HCT116 (cell line): ENCODE measurements at regions of chr3 and their contacts with region 1.

Region 1: DNA sequence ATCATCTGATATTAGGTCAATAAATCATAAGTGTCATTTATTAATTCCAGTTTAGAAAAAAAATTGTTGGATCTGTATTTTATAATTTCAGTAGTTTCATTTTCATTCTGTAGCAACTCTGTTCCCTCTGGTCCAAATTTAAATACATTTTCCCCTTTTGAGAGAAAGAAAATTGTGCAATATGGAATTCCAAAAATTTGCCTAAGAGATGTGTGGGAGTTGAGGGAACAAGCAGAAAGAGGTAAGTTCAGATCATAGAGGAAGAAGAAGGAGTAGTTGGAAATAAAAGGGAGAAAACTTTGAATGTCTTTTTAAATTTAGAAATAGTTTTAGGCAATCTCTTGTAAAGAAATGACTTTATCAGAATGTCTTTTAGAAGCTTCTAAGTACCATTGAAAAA is 48.9 kb upstream of the MME start:
- DNase-seq: no peak
- ATAC-seq: no peak
- H3K4me3 ChIP-seq: no peak overlapping the region
- H3K27ac ChIP-seq: no peak overlapping the region
- H3K4me1 ChIP-seq: no peaks in the 10 kb centered on the region
- H3K27me3 ChIP-seq: no peaks in the 10 kb centered on the region
- CTCF ChIP-seq: no peak
- POLR2A ChIP-seq: no peak
- RAD21 ChIP-seq: no peak

Region 2: GRCh38 chr3:155053756-155054155 is 22.6 kb after region 1 on chr3:
- CTCF ChIA-PET with region 1: no interaction called
- POLR2A ChIA-PET with region 1: no interaction called
- RAD21 ChIA-PET with region 1: no interaction called
- intact Hi-C with region 1: loop called (anchors 1 kb)
- DNase-seq: no peak
- ATAC-seq: no peak
- H3K4me3 ChIP-seq: no peak overlapping the region
- H3K27ac ChIP-seq: no peak overlapping the region
- H3K4me1 ChIP-seq: no peaks in the 10 kb centered on the region
- H3K27me3 ChIP-seq: no peaks in the 10 kb centered on the region
- CTCF ChIP-seq: no peak
- POLR2A ChIP-seq: no peak
- RAD21 ChIP-seq: no peak

Region 3: GRCh38 chr3:155323063-155323666 is 292.0 kb after region 1 on chr3:
- CTCF ChIA-PET with region 1: no interaction called
- POLR2A ChIA-PET with region 1: no interaction called
- RAD21 ChIA-PET with region 1: no interaction called
- intact Hi-C with region 1: no loop called
- DNase-seq: peak; percentile 68
- ATAC-seq: peak; percentile 82
- H3K4me3 ChIP-seq: no peak overlapping the region
- H3K27ac ChIP-seq: no peak overlapping the region
- H3K4me1 ChIP-seq: no peaks in the 10 kb centered on the region
- H3K27me3 ChIP-seq: no peaks in the 10 kb centered on the region
- CTCF ChIP-seq: peak; percentile 66 to 85 (median 80)
- POLR2A ChIP-seq: no peak
- RAD21 ChIP-seq: peak; percentile 93